Activated CD8-positive, alpha-beta memory T cell treated with anti-CD3 and anti-CD28 coated beads, Interleukin-2, amount 10 ng/mL, durations not matched to agents 7 days and 5 days (primary cell): ENCODE measurements at regions of chr7 and their contacts with region 1.

Region 1: GRCh38 chr7:142478479-142479072 is 220.7 kb upstream of the PRSS58 start:
- DNase-seq: peak; percentile 49
- ATAC-seq: peak; percentile 58
- H3K4me3 Mint-ChIP-seq: no peak overlapping the region
- H3K27ac Mint-ChIP-seq: peak overlapping the region; percentile 24
- H3K4me1 Mint-ChIP-seq: peaks cover 33% of the 10 kb centered on the region
- H3K27me3 Mint-ChIP-seq: no peaks in the 10 kb centered on the region

Region 2: GRCh38 chr7:142412551-142413193 is 65.9 kb before region 1 on chr7:
- CTCF ChIA-PET with region 1: interaction called, 12 read pairs
- DNase-seq: peak; percentile 55
- ATAC-seq: peak; percentile 58
- H3K4me3 Mint-ChIP-seq: no peak overlapping the region
- H3K27ac Mint-ChIP-seq: no peak overlapping the region
- H3K4me1 Mint-ChIP-seq: peaks cover 11% of the 10 kb centered on the region
- H3K27me3 Mint-ChIP-seq: no peaks in the 10 kb centered on the region

Region 3: GRCh38 chr7:142838461-142839213 is 360.1 kb after region 1 on chr7:
- CTCF ChIA-PET with region 1: no interaction called
- DNase-seq: no peak
- ATAC-seq: no peak
- H3K4me3 Mint-ChIP-seq: no peak overlapping the region
- H3K27ac Mint-ChIP-seq: no peak overlapping the region
- H3K4me1 Mint-ChIP-seq: peaks cover 8% of the 10 kb centered on the region
- H3K27me3 Mint-ChIP-seq: peaks cover 8% of the 10 kb centered on the region